ENCODE measurements at regions of chr12 and their contacts with region 1.

Region 1: GRCh38 chr12:95918194-95918993 is 24.0 kb downstream of the CCDC38 start:
- DNase-seq: peak; percentile 59
- H3K4me3 Mint-ChIP-seq: no peak overlapping the region
- H3K27ac Mint-ChIP-seq: no peak overlapping the region
- H3K4me1 Mint-ChIP-seq: no peaks in the 10 kb centered on the region
- H3K27me3 Mint-ChIP-seq: peaks cover 21% of the 10 kb centered on the region
- CTCF ChIP-seq: peak; percentile 81

Region 2: GRCh38 chr12:95959107-95959506 is 40.7 kb after region 1 on chr12:
- CTCF ChIA-PET with region 1: interaction called, 12 read pairs
- intact Hi-C with region 1: loop called (anchors 1 kb)
- DNase-seq: peak; percentile 6
- H3K4me3 Mint-ChIP-seq: no peak overlapping the region
- H3K27ac Mint-ChIP-seq: no peak overlapping the region
- H3K4me1 Mint-ChIP-seq: no peaks in the 10 kb centered on the region
- H3K27me3 Mint-ChIP-seq: no peaks in the 10 kb centered on the region
- CTCF ChIP-seq: no peak

Region 3: GRCh38 chr12:95998611-95999286 is 80.4 kb after region 1 on chr12:
- CTCF ChIA-PET with region 1: interaction called, 15 read pairs
- intact Hi-C with region 1: loop called (anchors 1 kb)
- DNase-seq: peak; percentile 54
- H3K4me3 Mint-ChIP-seq: no peak overlapping the region
- H3K27ac Mint-ChIP-seq: no peak overlapping the region
- H3K4me1 Mint-ChIP-seq: peaks cover 33% of the 10 kb centered on the region
- H3K27me3 Mint-ChIP-seq: no peaks in the 10 kb centered on the region
- CTCF ChIP-seq: peak; percentile 46